ENCODE measurements at regions of chr16 and their contacts with region 1.

Region 1: GRCh38 chr16:3065069-3065741 is at the start of gene IL32:
- DNase-seq: peak; percentile 47 to 48
- H3K4me3 ChIP-seq: peak within 1 kb of the TSS in 1 of 3 donors; percentile 18
- H3K27ac ChIP-seq: peak within 1 kb of the TSS; percentile 54 to 76 (median 71)
- H3K4me1 ChIP-seq: peaks cover 0 to 36% of the 10 kb centered on the region in 2 donors
- H3K27me3 ChIP-seq: no peaks in the 10 kb centered on the region
- CTCF ChIP-seq: no peak
- POLR2A ChIP-seq: peak in 1 of 2 donors; percentile 16
- total RNA-seq, gene IL32: 24.0 to 53.6 (median 28.9) TPM

Region 2: DNA sequence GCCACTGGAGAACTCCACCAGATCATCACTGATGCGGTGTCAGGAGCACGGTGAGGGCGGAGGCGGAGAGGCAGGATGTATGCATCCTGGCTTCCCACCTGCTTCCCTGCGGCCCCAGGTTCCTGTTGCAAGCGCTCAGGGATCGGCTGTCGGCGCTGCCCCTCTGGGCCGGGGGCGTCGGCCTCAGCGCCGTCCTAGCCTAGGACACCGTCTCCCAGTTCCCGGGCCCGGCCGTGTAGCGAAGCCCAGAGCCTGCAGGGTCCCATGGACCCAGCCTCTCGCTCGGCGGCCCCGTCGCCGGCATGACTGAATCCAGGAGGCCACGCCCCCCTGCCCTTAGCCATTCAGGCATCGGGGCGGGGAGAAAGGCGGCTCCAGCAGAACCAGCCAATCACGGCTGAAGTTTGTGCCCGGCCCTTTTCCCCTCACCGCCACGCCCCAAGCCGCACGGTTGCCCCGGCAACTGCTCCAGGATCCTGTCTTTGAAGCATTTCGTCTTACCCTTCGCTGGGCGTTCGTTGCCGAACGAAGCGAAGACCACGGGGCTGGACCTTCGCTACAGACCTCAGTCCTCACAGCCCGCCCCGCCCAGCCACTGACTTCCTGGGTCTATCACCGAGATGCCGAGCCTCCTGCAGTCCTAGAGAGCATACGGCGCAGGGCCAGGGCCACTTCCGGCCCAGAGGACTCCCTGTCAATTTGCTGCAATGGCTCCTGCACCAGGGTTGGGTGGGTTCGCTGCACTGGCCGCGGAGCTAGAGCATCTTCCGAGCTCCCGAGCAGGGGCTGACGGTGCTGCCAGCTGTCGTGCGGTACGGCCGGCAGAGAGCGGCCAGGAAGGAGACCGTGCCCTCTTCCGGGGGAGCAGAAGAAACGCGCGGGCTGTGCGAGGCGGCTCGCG is 59.0 kb after region 1 on chr16:
- intact Hi-C with region 1: loop called (anchors 10 kb)
- DNase-seq: peak; percentile 98
- H3K4me3 ChIP-seq: peak overlapping the region; percentile 29 to 51 (median 46)
- H3K27ac ChIP-seq: peak overlapping the region; percentile 41 to 68 (median 54)
- H3K4me1 ChIP-seq: peaks cover 6 to 20% of the 10 kb centered on the region in 2 donors
- H3K27me3 ChIP-seq: no peaks in the 10 kb centered on the region
- CTCF ChIP-seq: peak in 1 of 6 experiments; percentile 24
- POLR2A ChIP-seq: peak in 1 of 2 donors; percentile 52

Region 3: DNA sequence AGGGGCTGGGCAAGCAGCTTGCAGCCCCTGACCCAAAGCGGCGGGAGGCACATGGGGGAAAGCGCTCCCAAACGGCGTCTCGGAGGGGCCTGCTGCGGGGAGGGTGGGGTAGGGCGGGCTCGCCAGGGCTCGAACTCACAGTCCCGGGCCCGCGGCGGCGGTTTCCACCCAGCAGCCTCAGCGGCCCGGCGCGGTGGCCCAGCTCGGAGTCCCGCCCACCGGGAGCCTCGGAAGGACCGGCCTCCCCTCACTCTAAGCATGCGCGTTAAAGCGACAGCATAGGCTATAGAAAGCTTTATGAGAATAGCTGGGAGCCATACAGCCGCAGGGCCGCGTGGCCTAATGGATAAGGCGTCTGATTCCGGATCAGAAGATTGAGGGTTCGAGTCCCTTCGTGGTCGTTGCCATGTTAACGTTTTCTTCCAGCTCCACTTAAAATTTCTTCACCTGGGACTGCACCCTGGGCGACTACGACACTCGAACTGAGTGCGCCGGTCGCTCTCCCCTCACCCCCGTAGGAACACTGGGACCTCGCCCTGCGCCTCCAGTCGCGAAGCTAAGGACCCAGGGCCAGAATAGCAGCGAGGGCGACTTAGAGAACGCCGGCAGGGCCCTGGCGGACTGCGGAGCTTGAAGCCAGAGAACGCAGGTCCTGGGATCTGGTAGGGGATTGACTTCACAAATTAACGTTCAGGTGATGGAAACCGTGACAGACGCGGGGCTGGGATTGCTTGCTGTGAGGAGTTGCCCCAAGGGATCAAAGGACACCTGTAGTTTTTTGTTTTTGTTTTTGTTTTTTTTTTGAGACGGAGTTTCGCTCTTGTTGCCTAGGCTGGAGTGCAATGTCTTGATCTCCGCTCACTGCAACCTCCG is 85.4 kb after region 1 on chr16:
- intact Hi-C with region 1: no loop called
- DNase-seq: peak; percentile 96
- H3K4me3 ChIP-seq: peak overlapping the region; percentile 30 to 69 (median 62)
- H3K27ac ChIP-seq: peak overlapping the region; percentile 80 to 88 (median 84)
- H3K4me1 ChIP-seq: peaks cover 15 to 16% of the 10 kb centered on the region in 2 donors
- H3K27me3 ChIP-seq: no peaks in the 10 kb centered on the region
- CTCF ChIP-seq: no peak
- POLR2A ChIP-seq: peak in 1 of 2 donors; percentile 17

Region 4: GRCh38 chr16:3182608-3183444 is 117.6 kb after region 1 on chr16:
- intact Hi-C with region 1: no loop called
- DNase-seq: peak; percentile 37 to 38
- H3K4me3 ChIP-seq: peak overlapping the region in 1 of 3 donors; percentile 2
- H3K27ac ChIP-seq: no peak overlapping the region
- H3K4me1 ChIP-seq: peaks cover 6 to 14% of the 10 kb centered on the region in 2 donors
- H3K27me3 ChIP-seq: peaks cover 27% of the 10 kb centered on the region
- CTCF ChIP-seq: peak in 3 of 6 experiments; percentile 9 to 38 (median 11)
- POLR2A ChIP-seq: no peak